ENCODE measurements at regions of chrX and their contacts with region 1.

Region 1: DNA sequence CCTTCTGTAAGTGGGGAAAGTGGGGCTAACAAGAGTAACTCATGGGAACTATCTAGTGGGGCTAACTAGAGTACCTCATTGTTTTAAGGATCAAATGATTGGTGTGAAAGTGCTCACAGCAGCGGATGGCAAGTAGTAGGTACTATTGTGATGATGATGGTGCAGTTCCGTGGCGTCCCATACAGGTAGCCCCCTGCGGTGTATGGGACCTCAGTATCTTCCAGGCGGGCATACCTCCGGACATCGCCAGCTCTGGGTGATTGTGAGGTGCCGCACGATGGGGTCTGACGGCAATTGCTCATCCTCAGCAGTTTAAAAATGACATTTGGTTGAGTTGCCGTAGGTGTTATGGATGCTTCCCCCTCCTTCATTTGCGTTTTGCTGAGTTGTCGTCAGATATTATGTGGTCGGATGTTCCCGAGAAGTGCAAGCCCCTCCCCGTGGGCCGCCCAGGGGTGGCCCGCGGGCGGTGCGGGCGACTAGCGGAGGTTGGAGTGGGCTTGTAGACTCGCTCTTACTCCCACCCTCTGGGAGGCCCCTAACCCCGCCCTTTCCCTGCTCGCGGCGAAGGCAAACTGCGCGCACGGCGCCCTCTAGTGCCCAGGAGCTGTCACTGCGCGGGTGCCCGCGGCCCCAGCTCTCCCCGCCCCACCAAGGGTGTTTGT is 18.3 kb upstream of the GPR101 start:
- DNase-seq: peak; percentile 82
- H3K4me3 Mint-ChIP-seq: peak overlapping the region; percentile 86
- H3K27ac Mint-ChIP-seq: peak overlapping the region; percentile 63
- H3K4me1 Mint-ChIP-seq: peaks cover 4% of the 10 kb centered on the region
- H3K27me3 Mint-ChIP-seq: peaks cover 20% of the 10 kb centered on the region

Region 2: DNA sequence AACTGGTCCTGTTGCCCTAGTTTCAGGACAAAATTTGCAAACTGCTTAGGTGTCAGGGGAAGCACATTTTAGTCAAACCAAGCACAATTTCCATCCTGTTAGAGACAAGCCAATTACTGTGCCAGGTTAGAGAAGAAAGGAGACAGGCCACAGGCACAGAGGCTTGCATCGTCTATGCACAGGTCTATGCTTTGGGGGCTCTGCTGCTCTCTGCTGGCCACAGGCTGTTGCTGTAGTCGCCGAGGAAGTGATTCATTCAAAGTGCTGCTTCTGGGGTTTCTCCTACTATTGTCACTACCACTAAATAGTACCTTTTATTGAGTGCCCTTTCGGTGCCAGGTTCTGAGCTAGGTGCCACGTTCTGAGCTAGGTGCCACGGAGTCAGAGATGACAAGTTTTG is 474.6 kb before region 1 on chrX:
- CTCF ChIA-PET with region 1: no interaction called
- intact Hi-C with region 1: loop called (anchors 5 kb)
- DNase-seq: peak; percentile 82
- H3K4me3 Mint-ChIP-seq: peak overlapping the region; percentile 4
- H3K27ac Mint-ChIP-seq: peak overlapping the region; percentile 23
- H3K4me1 Mint-ChIP-seq: peaks cover 37% of the 10 kb centered on the region
- H3K27me3 Mint-ChIP-seq: no peaks in the 10 kb centered on the region

Region 3: GRCh38 chrX:136745215-136746173 is 306.6 kb before region 1 on chrX:
- CTCF ChIA-PET with region 1: no interaction called
- intact Hi-C with region 1: no loop called
- DNase-seq: peak; percentile 10
- H3K4me3 Mint-ChIP-seq: peak overlapping the region; percentile 45
- H3K27ac Mint-ChIP-seq: peak overlapping the region; percentile 91
- H3K4me1 Mint-ChIP-seq: peaks cover 76% of the 10 kb centered on the region
- H3K27me3 Mint-ChIP-seq: no peaks in the 10 kb centered on the region

Region 4: GRCh38 chrX:136909706-136910564 is 142.2 kb before region 1 on chrX:
- CTCF ChIA-PET with region 1: no interaction called
- intact Hi-C with region 1: loop called (anchors 1 kb)
- DNase-seq: peak; percentile 75
- H3K4me3 Mint-ChIP-seq: peak overlapping the region; percentile 89
- H3K27ac Mint-ChIP-seq: peak overlapping the region; percentile 87
- H3K4me1 Mint-ChIP-seq: peaks cover 15% of the 10 kb centered on the region
- H3K27me3 Mint-ChIP-seq: no peaks in the 10 kb centered on the region

Region 5: GRCh38 chrX:136953867-136954787 is 98.0 kb before region 1 on chrX:
- CTCF ChIA-PET with region 1: interaction called, 12 read pairs
- intact Hi-C with region 1: loop called (anchors 1 kb)
- DNase-seq: peak; percentile 79
- H3K4me3 Mint-ChIP-seq: no peak overlapping the region
- H3K27ac Mint-ChIP-seq: no peak overlapping the region
- H3K4me1 Mint-ChIP-seq: no peaks in the 10 kb centered on the region
- H3K27me3 Mint-ChIP-seq: no peaks in the 10 kb centered on the region

Region 6: DNA sequence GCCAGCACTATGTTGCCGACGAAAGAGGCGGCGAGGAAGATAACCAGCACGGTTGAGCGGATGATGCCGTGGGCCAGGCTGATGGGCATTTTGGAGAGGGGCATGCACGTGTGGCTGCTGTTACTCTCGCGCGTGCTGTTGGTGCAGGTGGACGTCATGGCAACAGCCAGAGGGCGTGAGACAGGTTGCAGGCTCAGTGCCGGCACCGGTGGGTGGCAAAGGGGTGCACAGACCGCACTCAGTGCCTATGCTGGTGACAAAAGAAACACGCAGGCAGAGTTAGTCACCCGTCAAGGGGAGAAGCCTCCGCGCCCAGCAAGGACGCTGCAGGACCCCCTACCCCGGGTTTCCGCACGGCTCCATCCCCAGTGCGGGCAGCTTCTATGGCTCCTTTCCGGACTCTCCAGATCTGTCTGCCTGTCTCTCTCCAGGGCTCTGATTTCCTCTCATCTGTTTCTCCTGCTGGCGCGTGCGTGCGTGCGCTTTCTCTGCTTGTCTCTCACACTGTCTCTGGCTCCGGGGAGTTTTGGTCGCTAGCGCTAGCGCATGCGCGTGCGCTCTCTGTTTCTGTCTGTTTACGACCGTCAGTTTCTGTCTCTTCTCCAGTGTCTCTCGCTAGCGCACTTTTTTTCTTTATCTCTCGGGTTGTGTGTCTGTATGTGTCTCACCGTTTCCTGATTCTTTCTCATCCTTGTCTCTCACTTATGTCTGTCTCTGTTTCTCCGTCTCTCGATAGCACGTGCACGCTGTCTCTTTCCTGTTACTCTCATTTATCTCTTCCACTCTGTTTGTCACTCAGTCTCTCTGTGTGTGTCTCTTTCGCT is 20.4 kb before region 1 on chrX:
- CTCF ChIA-PET with region 1: interaction called, 5 read pairs
- intact Hi-C with region 1: loop called (anchors 1 kb)
- DNase-seq: peak; percentile 62
- H3K4me3 Mint-ChIP-seq: no peak overlapping the region
- H3K27ac Mint-ChIP-seq: no peak overlapping the region
- H3K4me1 Mint-ChIP-seq: peaks cover 7% of the 10 kb centered on the region
- H3K27me3 Mint-ChIP-seq: peaks cover 42% of the 10 kb centered on the region

Region 7: GRCh38 chrX:137072396-137072795 is 20.3 kb after region 1 on chrX:
- CTCF ChIA-PET with region 1: no interaction called
- intact Hi-C with region 1: no loop called
- DNase-seq: no peak
- H3K4me3 Mint-ChIP-seq: no peak overlapping the region
- H3K27ac Mint-ChIP-seq: no peak overlapping the region
- H3K4me1 Mint-ChIP-seq: no peaks in the 10 kb centered on the region
- H3K27me3 Mint-ChIP-seq: no peaks in the 10 kb centered on the region

Region 8: DNA sequence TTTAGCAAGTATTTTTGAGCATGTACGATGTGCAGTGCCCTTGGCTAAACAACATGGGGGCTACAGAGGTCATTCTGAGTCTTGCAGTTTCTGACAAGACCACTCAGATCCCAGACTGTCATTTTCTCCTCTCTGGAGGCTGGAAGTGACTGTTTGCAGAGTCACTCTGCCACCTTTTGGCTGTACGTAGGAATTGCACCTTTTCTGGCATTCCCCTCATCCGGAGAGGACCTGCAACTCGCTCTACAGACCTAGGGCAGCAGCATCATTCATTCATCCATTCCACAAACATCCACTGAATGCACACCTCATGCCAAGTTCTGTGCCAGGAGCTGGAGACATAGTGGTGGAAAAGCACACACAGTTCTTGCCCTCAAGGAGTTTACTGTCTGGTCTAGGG is 142.1 kb after region 1 on chrX:
- CTCF ChIA-PET with region 1: interaction called, 4 read pairs
- intact Hi-C with region 1: loop called (anchors 10 kb)
- DNase-seq: peak; percentile 36
- H3K4me3 Mint-ChIP-seq: no peak overlapping the region
- H3K27ac Mint-ChIP-seq: no peak overlapping the region
- H3K4me1 Mint-ChIP-seq: peaks cover 2% of the 10 kb centered on the region
- H3K27me3 Mint-ChIP-seq: no peaks in the 10 kb centered on the region

Region 9: DNA sequence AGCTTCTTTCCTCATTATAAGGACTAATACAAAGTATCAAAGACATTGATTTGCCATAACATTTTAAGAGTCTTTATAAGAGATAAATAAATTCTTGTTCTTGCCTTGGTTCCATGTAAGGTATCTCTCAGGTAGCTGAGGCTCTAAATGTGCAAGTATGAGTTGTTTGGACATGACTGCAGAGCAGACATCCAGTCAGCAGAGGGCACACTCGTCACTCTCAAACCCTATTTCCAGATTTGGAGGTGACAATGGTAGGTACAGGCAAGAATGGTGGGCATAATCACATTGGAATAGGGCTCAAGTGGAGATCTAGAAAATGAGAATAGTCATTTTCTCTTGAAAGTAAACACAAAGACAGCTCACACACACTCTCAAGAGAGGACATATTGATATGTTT is 380.5 kb after region 1 on chrX:
- CTCF ChIA-PET with region 1: no interaction called
- intact Hi-C with region 1: loop called (anchors 5 kb)
- DNase-seq: peak; percentile 34
- H3K4me3 Mint-ChIP-seq: no peak overlapping the region
- H3K27ac Mint-ChIP-seq: no peak overlapping the region
- H3K4me1 Mint-ChIP-seq: peaks cover 5% of the 10 kb centered on the region
- H3K27me3 Mint-ChIP-seq: peaks cover 22% of the 10 kb centered on the region